ENCODE measurements at regions of chr1 and their contacts with region 1.

Region 1: DNA sequence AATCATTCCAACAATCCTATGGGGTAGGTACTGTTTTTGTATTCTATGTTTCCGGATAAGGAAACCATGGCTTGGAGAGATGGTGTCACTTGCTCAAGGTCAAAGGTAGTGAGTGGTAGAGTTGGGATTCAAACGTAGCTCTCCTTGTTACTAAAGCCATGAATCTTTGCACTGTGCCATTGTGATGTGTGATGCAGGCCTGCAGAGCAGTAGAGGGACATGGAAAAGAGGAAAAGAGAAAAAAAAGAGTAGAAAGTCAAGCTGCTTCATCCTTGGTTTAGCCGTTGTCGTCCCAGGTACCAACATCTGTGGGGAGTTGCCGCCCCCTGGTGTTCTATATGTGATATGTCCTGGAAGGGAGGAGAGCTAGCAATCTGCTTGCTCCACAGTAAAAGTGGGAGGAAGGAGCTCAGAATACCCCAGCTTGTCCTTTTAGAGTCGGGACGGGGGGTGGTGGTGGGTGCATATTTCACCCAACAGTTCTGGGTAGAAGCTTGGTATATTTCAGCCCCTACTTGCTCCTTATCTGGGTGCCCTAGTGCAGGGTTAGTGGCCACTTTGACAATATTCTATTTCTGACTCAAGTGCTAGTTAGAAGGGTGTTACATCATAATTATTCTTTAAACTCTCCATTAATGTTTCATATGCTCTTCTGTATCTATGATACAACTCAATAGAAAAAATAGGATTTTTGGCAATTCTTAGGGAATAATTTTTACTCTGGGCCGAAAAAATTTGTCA is 98.4 kb downstream of the EBNA1BP2 start:
- DNase-seq: peak; percentile 81
- H3K4me3 Mint-ChIP-seq: no peak overlapping the region
- H3K27ac Mint-ChIP-seq: no peak overlapping the region
- H3K4me1 Mint-ChIP-seq: peaks cover 9% of the 10 kb centered on the region
- H3K27me3 Mint-ChIP-seq: peaks cover 4% of the 10 kb centered on the region

Region 2: GRCh38 chr1:42766741-42767509 is 306.7 kb before region 1 on chr1 and contains the starts of genes C1orf50 and P3H1:
- CTCF ChIA-PET with region 1: interaction called, 11 read pairs
- DNase-seq: peak; percentile 100
- H3K4me3 Mint-ChIP-seq: no peak within 1 kb of the TSS
- H3K27ac Mint-ChIP-seq: peak within 1 kb of the TSS; percentile 93
- H3K4me1 Mint-ChIP-seq: peaks cover 40% of the 10 kb centered on the region
- H3K27me3 Mint-ChIP-seq: no peaks in the 10 kb centered on the region

Region 3: DNA sequence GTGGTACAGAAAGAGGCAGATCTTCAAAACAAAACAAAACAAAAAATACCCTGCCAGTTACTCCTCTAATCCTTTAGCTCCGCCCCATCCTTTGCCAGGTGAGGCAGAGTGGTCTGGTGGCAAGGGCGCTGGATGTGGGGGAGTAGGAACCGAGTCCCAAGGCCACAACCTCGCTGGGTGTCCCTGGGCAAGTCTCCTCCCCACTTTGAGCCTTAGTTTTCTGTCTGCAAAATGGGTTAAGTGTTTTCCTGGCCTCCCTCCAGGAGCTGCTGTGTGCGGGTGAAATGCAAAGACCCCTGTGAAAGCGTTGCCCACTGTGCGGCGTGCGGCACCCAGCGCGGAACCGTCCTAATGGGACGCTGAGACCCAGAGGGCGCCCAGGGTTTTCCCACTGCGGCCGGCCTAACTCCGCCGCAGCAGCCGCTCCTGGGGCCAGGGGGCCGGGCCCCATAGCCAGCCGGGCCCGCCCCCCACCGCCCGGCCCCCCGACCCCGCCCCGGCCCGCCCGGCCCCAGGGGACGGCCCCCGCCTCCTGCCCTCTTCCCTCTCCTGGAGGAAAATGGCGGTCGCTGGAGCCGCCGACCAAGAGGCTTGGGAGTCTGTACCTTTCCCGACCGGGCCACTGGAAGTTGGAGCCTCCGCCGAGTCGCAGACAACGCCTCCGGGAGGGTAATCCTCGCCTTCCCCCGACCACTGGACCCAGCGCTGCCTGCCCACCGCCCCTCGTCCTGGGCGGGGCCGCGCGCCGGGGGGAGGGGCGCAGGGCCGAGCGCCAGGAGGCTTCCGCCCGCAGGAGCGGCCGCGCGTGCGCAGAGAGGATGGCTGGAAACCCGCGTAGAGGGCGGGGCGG is 256.9 kb before region 1 on chr1 and contains the starts of genes ERMAP and SVBP:
- CTCF ChIA-PET with region 1: interaction called, 12 read pairs
- DNase-seq: peak; percentile 94
- H3K4me3 Mint-ChIP-seq: peak within 1 kb of the TSS; percentile 73
- H3K27ac Mint-ChIP-seq: peak within 1 kb of the TSS; percentile 88
- H3K4me1 Mint-ChIP-seq: peaks cover 22% of the 10 kb centered on the region
- H3K27me3 Mint-ChIP-seq: peaks cover 7% of the 10 kb centered on the region

Region 4: GRCh38 chr1:42913426-42914091 is 160.1 kb before region 1 on chr1:
- CTCF ChIA-PET with region 1: interaction called, 265 read pairs
- DNase-seq: peak; percentile 71
- H3K4me3 Mint-ChIP-seq: no peak overlapping the region
- H3K27ac Mint-ChIP-seq: no peak overlapping the region
- H3K4me1 Mint-ChIP-seq: peaks cover 5% of the 10 kb centered on the region
- H3K27me3 Mint-ChIP-seq: peaks cover 35% of the 10 kb centered on the region

Region 5: DNA sequence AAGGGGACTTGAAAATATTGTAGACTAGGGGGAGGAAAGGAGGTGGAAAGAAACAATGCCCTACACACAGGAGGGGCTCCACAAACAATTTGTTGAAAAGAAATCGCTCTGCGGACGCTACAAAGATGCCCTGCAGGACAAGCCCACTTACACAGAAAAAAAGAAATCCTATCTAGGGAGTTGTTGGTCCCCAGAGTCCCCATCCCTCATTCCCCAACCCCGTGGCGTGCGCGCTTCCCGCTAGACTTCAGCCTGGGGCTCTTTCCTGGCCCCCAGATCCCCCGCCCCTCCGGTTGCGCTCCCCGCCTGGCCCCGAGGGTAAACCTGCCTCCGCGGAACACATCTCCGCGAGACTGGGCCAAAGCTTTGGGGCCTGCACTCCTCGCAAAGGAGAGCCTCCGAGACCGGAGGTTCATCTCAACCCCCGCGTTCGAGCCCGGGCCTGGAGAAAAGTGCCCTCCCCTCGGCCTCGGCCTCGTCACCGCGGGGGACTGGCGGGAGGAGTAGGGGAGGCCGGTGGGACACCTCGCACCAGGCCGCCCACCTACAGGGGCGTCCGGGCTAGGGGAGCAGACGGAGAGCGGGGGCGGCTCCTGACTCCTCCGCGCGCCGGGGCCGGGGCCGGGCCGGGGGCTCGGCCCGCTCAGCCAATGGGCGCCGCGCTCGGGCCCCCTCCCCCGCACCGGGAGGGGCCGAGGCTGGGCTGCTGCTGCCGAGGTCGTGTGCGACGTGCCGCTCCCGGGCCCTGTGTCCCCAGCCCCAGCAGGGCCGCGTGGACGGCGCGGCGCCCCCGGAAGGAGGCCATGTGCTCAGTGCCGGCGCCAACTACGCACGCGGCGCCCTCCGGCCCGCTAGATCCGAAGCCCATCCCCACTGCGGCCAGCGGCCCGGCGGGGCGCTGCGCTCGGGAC is 115.8 kb before region 1 on chr1:
- CTCF ChIA-PET with region 1: interaction called, 12 read pairs
- DNase-seq: peak; percentile 76
- H3K4me3 Mint-ChIP-seq: peak overlapping the region; percentile 97
- H3K27ac Mint-ChIP-seq: peak overlapping the region; percentile 94
- H3K4me1 Mint-ChIP-seq: peaks cover 59% of the 10 kb centered on the region
- H3K27me3 Mint-ChIP-seq: peaks cover 34% of the 10 kb centered on the region

Measured in activated naive CD4-positive, alpha-beta T cell treated with anti-CD3 and anti-CD28 coated beads, Interleukin-2, amount 10 ng/mL, durations not matched to agents 7 days and 5 days (primary cell).